Naive thymus-derived CD4-positive, alpha-beta T cell (primary cell): ENCODE measurements at regions of chr3 and their contacts with region 1.

Region 1: DNA sequence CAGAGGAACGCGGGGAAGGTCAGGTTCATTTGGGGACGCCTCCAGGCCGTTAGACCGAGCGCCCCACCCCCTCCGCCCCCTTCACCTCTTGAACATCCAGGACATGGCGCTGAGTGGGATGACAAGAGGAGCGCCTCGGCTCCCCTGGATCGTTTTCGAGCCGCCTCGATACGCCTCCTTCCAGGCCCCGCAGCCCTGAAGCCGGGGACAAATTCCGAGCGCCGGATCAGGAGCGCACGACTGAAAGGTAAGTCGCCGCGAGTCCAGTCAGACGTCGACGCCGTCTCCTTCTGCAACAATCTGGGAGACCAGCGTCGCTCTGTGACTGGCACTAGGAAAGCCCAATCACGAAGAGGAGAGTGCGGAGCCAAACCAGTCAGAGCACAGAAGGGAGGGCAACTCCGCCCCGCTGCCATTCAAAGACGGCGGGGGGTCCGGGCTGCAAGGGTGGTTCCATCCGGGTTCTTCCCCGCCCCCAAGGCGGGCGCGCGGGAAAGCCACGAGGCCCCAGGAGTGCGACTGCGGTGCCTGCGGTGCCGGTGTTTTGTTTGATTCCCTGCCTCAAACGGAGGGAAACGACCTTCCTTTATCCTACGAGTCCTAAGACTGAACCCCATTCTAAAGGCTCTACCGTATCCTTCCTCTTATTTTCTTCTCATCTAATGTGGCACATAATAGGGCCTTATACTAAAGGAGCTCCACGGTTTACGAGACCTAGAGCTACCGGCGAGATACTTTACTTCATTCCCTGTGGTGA is at the start of gene HLTF:
- DNase-seq: peak; percentile 75 to 93 (median 90)
- ATAC-seq: peak; percentile 99
- H3K4me3 ChIP-seq: peak within 1 kb of the TSS; percentile 97
- H3K4me3 Mint-ChIP-seq: peak within 1 kb of the TSS; percentile 84 to 100 (median 97)
- H3K27ac ChIP-seq: peak within 1 kb of the TSS; percentile 64
- H3K27ac Mint-ChIP-seq: peak within 1 kb of the TSS; percentile 54 to 95 (median 86)
- H3K4me1 ChIP-seq: peaks cover 4 to 18% of the 10 kb centered on the region in 2 donors
- H3K4me1 Mint-ChIP-seq: peaks cover 15 to 28% (median 22%) of the 10 kb centered on the region in 7 donors
- H3K27me3 ChIP-seq: no peaks in the 10 kb centered on the region
- H3K27me3 Mint-ChIP-seq: no peaks in the 10 kb centered on the region
- total RNA-seq, gene HLTF: 9.1 to 26.5 (median 17.3) TPM

Region 2: GRCh38 chr3:148955544-148956346 is 130.7 kb before region 1 on chr3:
- CTCF ChIA-PET with region 1: no interaction called
- POLR2A ChIA-PET with region 1: no interaction called
- intact Hi-C with region 1: loop called in 1 of 2 experiments (anchors 10 kb)
- DNase-seq: peak in 4 of 9 donors; percentile 13 to 41 (median 32)
- ATAC-seq: peak; percentile 41
- H3K4me3 ChIP-seq: no peak overlapping the region
- H3K4me3 Mint-ChIP-seq: no peak overlapping the region
- H3K27ac ChIP-seq: no peak overlapping the region
- H3K27ac Mint-ChIP-seq: no peak overlapping the region
- H3K4me1 ChIP-seq: no peaks in the 10 kb centered on the region
- H3K4me1 Mint-ChIP-seq: peaks cover 0 to 13% (median 6%) of the 10 kb centered on the region in 7 donors
- H3K27me3 ChIP-seq: no peaks in the 10 kb centered on the region
- H3K27me3 Mint-ChIP-seq: peaks cover 0 to 17% (median 0%) of the 10 kb centered on the region in 5 donors

Region 3: GRCh38 chr3:149042789-149043386 is 43.5 kb before region 1 on chr3:
- CTCF ChIA-PET with region 1: no interaction called
- POLR2A ChIA-PET with region 1: no interaction called
- intact Hi-C with region 1: loop called in 1 of 2 experiments (anchors 2 kb)
- DNase-seq: no peak
- ATAC-seq: no peak
- H3K4me3 ChIP-seq: no peak overlapping the region
- H3K4me3 Mint-ChIP-seq: peak overlapping the region in 2 of 10 donors; percentile 15 to 54
- H3K27ac ChIP-seq: no peak overlapping the region
- H3K27ac Mint-ChIP-seq: peak overlapping the region in 6 of 9 donors; percentile 3 to 82 (median 50)
- H3K4me1 ChIP-seq: no peaks in the 10 kb centered on the region
- H3K4me1 Mint-ChIP-seq: peaks cover 3 to 25% (median 21%) of the 10 kb centered on the region in 7 donors
- H3K27me3 ChIP-seq: no peaks in the 10 kb centered on the region
- H3K27me3 Mint-ChIP-seq: no peaks in the 10 kb centered on the region

Region 4: GRCh38 chr3:149058602-149059001 is 27.8 kb before region 1 on chr3:
- CTCF ChIA-PET with region 1: no interaction called
- POLR2A ChIA-PET with region 1: no interaction called
- intact Hi-C with region 1: loop called in 1 of 2 experiments (anchors 5 kb)
- DNase-seq: no peak
- ATAC-seq: no peak
- H3K4me3 ChIP-seq: no peak overlapping the region
- H3K4me3 Mint-ChIP-seq: no peak overlapping the region
- H3K27ac ChIP-seq: no peak overlapping the region
- H3K27ac Mint-ChIP-seq: peak overlapping the region in 1 of 9 donors; percentile 24
- H3K4me1 ChIP-seq: no peaks in the 10 kb centered on the region
- H3K4me1 Mint-ChIP-seq: no peaks in the 10 kb centered on the region
- H3K27me3 ChIP-seq: no peaks in the 10 kb centered on the region
- H3K27me3 Mint-ChIP-seq: no peaks in the 10 kb centered on the region

Region 5: GRCh38 chr3:149752051-149752787 is 665.8 kb after region 1 on chr3 and contains the start of gene COMMD2:
- CTCF ChIA-PET with region 1: no interaction called
- POLR2A ChIA-PET with region 1: no interaction called
- intact Hi-C with region 1: loop called in 1 of 2 experiments (anchors 1 kb)
- DNase-seq: peak; percentile 52 to 76 (median 63)
- ATAC-seq: peak; percentile 91
- H3K4me3 ChIP-seq: peak within 1 kb of the TSS; percentile 81
- H3K4me3 Mint-ChIP-seq: peak within 1 kb of the TSS; percentile 94 to 98 (median 96)
- H3K27ac ChIP-seq: peak within 1 kb of the TSS; percentile 73
- H3K27ac Mint-ChIP-seq: peak within 1 kb of the TSS; percentile 90 to 97 (median 96)
- H3K4me1 ChIP-seq: peaks cover 9 to 20% of the 10 kb centered on the region in 2 donors
- H3K4me1 Mint-ChIP-seq: peaks cover 12 to 56% (median 32%) of the 10 kb centered on the region in 7 donors
- H3K27me3 ChIP-seq: no peaks in the 10 kb centered on the region
- H3K27me3 Mint-ChIP-seq: peaks cover 0 to 2% (median 0%) of the 10 kb centered on the region in 5 donors
- total RNA-seq, gene COMMD2: 29.9 to 44.4 (median 33.4) TPM